AG04449 (cell line): ENCODE measurements at regions of chr16 and their contacts with region 1.

Region 1: GRCh38 chr16:85821441-85822135 is 22.1 kb downstream of the COX4I1 start:
- DNase-seq: no peak
- H3K4me3 ChIP-seq: no peak overlapping the region
- CTCF ChIP-seq: peak; percentile 98

Region 2: GRCh38 chr16:85761861-85762260 is 59.7 kb before region 1 on chr16:
- CTCF ChIA-PET with region 1: no interaction called
- POLR2A ChIA-PET with region 1: no interaction called
- DNase-seq: no peak
- H3K4me3 ChIP-seq: no peak overlapping the region
- CTCF ChIP-seq: no peak

Region 3: GRCh38 chr16:85799497-85800337 is 21.9 kb before region 1 on chr16 and contains the starts of genes COX4I1 and EMC8:
- CTCF ChIA-PET with region 1: interaction called, 63 read pairs
- POLR2A ChIA-PET with region 1: interaction called, 3 read pairs
- DNase-seq: peak; percentile 33
- H3K4me3 ChIP-seq: peak within 1 kb of the TSS; percentile 96
- CTCF ChIP-seq: no peak

Region 4: DNA sequence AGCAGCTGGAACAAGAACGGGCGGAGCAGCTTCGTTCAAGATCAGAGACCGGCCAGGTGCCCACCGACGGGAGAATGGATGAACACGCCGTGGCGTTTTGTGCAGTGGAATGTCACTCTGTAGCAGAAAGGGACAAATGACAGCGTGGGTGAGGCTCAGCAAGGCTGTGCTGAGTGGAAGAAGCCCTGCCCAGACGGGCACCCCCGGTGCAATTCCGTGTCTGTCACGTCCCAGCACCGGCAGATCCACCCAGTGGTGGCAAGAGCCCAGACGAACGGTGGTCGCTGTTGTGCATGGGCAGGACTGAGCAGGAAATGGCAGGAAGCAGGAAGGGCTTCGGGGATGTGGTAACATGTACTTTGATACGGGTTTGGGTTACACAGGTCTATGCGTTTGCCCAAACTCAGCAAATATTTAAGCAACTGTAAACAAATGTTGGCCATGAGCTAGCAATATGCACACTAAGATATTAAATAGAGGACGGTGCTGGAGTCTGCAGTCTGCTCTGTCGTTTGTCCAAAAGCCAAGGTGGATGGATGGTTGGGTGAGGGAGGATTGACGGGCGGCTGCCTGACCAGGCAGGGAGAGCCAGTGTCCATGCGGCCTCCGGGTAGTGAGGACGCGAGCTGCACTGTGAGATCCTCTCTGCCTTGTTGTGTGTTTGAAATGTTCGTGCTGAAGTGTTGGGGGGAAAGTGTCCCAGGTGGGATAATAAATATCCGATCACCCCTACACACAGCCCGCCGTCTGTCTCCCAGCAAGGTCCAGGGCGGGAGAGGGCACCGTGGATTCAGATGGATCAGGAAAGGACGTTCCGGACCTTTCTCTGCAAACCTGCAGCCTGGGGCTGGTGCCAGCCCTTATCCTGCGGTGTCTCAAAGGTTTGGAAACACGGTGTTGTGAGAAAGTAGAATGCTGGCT is 26.4 kb after region 1 on chr16:
- CTCF ChIA-PET with region 1: interaction called, 10 read pairs
- POLR2A ChIA-PET with region 1: no interaction called
- DNase-seq: no peak
- H3K4me3 ChIP-seq: no peak overlapping the region
- CTCF ChIP-seq: no peak

Region 5: DNA sequence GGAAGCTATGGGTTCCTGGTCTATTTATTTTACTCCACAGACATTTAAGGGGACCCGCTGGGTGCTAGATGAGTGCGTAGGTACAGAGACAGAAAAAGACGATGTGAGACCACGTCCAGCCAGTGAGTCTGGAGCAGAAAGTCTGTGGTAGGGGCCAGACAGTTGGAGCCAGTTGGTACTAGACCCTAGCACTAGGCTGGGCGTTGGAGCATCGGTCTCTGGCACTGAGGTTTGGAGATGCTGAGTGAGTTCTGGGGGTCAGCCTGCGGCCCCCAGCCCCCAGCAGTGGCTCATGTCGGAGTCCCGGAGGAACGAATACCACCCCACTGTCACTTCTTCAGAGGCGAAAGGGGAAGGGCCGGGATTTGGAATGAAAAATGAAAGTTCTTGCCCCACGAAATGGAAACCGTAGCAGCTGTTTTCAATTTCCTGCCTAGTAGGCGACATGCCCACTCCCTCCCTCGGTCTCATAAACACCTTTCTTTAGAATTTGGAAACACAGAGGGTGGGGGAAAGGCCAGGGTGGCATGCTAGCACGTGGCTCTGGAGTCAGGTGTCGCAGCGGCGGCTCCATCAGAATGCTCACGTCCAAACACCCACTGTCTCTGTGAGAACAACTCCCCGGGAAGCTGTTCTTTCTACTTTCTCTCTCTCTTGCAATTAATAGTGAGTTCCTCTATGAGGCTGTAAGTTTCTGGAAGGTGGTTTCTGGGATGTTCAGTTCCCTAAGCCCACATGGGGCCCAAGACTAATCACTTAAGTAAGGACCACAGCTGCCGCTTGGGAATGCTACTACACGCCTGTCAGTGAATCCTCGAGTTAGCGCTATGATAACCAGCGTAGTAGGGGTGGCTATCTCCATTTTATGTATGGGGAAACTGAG is 174.2 kb after region 1 on chr16:
- CTCF ChIA-PET with region 1: interaction called, 146 read pairs
- POLR2A ChIA-PET with region 1: no interaction called
- DNase-seq: no peak
- H3K4me3 ChIP-seq: no peak overlapping the region
- CTCF ChIP-seq: no peak

Region 6: DNA sequence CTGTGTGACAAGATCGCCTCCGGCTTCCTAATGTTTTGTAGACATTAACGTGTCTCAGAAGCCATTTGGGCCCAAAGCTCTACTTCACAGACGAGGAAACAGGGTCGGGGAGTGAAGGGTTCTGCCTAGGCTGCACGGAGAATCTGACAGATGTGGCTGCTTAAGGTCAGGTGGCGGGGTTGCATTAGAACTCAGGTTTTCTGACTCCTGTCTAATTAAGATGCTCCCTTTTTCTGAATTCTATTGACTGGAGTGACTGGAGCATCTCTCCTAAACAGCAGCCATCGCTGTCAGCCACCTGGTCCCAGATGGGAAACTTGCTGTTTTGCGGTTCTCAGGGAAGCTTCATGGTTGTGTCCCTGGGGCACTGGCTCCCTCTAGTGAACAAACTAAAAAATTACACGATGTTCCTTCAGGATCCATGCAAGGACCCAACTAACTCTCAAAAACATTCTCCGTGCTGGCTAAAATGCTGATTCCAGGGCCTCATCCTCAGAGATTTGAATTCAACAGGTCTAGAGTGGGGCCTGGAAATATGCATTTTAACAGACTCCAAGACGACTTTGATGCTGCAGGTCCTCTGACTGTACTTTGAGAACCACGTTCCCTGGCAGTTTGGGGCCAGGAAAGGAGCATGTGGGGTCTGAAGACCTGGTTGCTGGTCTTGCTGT is 194.7 kb after region 1 on chr16:
- CTCF ChIA-PET with region 1: interaction called, 316 read pairs
- POLR2A ChIA-PET with region 1: no interaction called
- DNase-seq: peak; percentile 4
- H3K4me3 ChIP-seq: no peak overlapping the region
- CTCF ChIP-seq: peak; percentile 64

Region 7: DNA sequence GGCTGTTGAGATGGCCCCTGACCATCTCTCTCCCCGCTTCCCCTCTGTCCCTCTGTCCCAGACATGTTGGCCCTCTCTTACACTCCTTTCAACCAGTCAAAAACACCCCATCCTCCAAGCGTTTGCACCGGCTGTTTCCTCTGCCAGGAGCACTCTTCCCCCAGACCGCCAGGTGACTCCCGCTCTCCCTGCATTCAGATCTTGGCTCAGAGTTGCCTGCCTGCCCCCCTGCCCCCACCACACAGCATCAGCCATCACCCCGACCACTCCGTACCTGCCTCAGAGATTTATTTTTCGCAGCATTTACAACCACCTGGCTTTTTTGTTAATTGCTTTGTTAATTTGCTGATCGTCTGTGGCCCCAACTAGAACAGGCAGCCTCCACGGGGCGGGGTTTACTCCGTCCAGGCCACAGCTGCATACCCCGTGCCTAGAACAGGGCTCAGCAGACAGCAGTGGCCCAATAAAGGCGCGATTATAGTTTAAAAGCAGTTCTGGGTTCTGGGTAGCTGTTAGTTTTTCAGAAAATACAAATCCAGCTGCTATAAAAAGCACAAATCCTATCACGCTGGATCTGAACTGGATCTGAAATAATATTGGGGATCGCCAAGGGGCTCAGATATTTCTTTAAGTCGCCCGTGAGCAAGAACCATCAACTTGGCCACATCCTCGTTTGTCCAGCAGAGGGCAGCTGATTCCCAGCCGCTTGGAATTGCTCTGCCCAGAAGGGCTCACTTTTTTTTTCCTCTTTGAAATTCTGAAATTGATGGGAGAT is 250.9 kb after region 1 on chr16:
- CTCF ChIA-PET with region 1: interaction called, 12 read pairs
- POLR2A ChIA-PET with region 1: no interaction called
- DNase-seq: peak; percentile 4
- H3K4me3 ChIP-seq: no peak overlapping the region
- CTCF ChIP-seq: peak; percentile 78